ENCODE measurements at regions of chr9 and their contacts with region 1.

Region 1: DNA sequence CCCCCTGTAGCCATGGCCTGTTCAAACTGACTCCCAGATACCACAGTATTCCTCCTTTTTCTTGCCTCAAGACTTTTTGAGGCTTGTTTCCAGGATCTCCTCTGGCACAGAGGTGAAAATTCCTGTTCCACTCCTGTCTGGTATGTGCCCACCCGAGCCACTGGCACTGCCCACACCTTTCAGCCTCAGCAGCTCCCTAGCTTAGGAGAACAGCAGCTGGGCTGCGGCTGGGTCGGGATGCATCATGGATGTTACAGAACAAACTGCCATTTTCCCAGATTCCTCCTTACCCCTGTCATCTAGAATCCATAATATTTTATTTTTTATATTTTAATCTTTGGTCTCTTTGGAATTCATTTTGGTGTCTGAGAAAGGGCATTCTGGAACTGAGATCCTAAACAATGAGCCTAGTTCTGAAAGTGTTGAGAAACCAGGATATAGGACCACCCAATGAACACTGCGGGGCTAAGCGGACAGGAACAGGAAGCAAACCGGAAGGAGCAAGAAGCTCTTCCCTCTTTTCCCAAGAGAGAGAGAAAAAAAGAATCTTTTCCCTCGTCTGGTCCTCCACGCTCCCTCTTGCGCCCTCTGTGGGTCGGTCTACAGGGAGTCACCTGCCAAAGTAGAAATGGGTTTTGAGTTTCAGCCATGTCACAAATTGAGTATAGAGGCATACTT is 12.5 kb downstream of the OR2S2 start:
- DNase-seq: peak; percentile 80
- H3K4me3 Mint-ChIP-seq: no peak overlapping the region
- H3K27ac Mint-ChIP-seq: no peak overlapping the region
- H3K4me1 Mint-ChIP-seq: peaks cover 63% of the 10 kb centered on the region
- H3K27me3 Mint-ChIP-seq: no peaks in the 10 kb centered on the region

Region 2: GRCh38 chr9:35272989-35273388 is 672.5 kb before region 1 on chr9:
- CTCF ChIA-PET with region 1: no interaction called
- POLR2A ChIA-PET with region 1: no interaction called
- intact Hi-C with region 1: no loop called
- DNase-seq: no peak
- H3K4me3 Mint-ChIP-seq: no peak overlapping the region
- H3K27ac Mint-ChIP-seq: no peak overlapping the region
- H3K4me1 Mint-ChIP-seq: peaks cover 26% of the 10 kb centered on the region
- H3K27me3 Mint-ChIP-seq: peaks cover 5% of the 10 kb centered on the region

Region 3: GRCh38 chr9:35814841-35815543 is 130.5 kb before region 1 on chr9 and contains the start of gene HINT2:
- CTCF ChIA-PET with region 1: no interaction called
- POLR2A ChIA-PET with region 1: no interaction called
- intact Hi-C with region 1: no loop called
- DNase-seq: peak; percentile 99
- H3K4me3 Mint-ChIP-seq: peak within 1 kb of the TSS; percentile 96
- H3K27ac Mint-ChIP-seq: peak within 1 kb of the TSS; percentile 93
- H3K4me1 Mint-ChIP-seq: peaks cover 33% of the 10 kb centered on the region
- H3K27me3 Mint-ChIP-seq: no peaks in the 10 kb centered on the region
- total RNA-seq, gene HINT2: 67.8 to 72.6 TPM

Region 4: DNA sequence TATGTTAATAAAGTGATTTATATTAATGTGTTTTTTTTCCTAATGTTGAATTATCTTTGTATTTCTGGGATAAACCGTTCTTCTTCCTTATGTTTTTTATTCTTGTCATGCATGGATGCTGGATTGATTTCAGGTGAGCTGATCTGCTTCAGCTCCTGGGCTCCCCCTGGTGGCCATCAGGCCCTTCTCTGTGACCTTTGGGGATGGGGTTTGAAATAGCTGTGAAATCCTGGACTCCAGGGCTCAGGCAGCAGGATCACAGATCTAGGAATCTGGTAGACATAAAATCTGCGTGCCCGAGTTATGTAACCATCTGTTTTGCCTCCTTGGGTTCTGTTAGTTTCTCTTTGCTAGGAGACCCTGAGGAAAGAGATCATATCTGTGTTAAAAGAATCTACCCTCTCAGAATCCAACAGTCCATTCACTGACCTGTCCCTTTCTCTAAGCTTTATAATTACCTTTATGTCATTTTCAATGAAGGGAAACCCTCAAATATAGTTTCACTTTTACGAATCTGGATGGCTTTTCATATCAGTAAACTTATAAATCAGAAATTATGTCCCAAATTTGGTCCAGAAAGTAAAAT is 63.1 kb before region 1 on chr9:
- CTCF ChIA-PET with region 1: interaction called, 11 read pairs
- POLR2A ChIA-PET with region 1: no interaction called
- intact Hi-C with region 1: no loop called
- DNase-seq: peak; percentile 84
- H3K4me3 Mint-ChIP-seq: no peak overlapping the region
- H3K27ac Mint-ChIP-seq: no peak overlapping the region
- H3K4me1 Mint-ChIP-seq: no peaks in the 10 kb centered on the region
- H3K27me3 Mint-ChIP-seq: no peaks in the 10 kb centered on the region

Region 5: DNA sequence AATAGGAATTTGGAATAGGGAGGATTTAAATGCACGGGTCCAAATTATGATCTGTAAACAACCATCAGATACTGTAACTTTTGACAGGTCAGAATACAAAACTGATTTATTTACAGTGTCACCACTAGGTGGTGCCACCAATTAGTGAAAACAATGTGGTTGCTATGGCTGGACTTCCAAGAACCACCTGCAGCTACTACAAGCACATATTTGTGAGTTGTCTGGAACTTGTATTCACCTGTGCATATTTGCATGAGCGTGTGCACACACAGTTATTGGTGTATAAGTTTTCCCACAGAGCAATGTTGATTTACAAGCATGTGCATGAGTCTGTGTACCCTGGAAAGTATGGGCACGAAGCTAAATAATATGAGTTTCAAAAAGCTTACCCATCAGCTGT is 42.4 kb before region 1 on chr9:
- CTCF ChIA-PET with region 1: interaction called, 101 read pairs
- POLR2A ChIA-PET with region 1: no interaction called
- intact Hi-C with region 1: loop called (anchors 1 kb)
- DNase-seq: peak; percentile 31
- H3K4me3 Mint-ChIP-seq: no peak overlapping the region
- H3K27ac Mint-ChIP-seq: no peak overlapping the region
- H3K4me1 Mint-ChIP-seq: peaks cover 25% of the 10 kb centered on the region
- H3K27me3 Mint-ChIP-seq: peaks cover 4% of the 10 kb centered on the region

Region 6: DNA sequence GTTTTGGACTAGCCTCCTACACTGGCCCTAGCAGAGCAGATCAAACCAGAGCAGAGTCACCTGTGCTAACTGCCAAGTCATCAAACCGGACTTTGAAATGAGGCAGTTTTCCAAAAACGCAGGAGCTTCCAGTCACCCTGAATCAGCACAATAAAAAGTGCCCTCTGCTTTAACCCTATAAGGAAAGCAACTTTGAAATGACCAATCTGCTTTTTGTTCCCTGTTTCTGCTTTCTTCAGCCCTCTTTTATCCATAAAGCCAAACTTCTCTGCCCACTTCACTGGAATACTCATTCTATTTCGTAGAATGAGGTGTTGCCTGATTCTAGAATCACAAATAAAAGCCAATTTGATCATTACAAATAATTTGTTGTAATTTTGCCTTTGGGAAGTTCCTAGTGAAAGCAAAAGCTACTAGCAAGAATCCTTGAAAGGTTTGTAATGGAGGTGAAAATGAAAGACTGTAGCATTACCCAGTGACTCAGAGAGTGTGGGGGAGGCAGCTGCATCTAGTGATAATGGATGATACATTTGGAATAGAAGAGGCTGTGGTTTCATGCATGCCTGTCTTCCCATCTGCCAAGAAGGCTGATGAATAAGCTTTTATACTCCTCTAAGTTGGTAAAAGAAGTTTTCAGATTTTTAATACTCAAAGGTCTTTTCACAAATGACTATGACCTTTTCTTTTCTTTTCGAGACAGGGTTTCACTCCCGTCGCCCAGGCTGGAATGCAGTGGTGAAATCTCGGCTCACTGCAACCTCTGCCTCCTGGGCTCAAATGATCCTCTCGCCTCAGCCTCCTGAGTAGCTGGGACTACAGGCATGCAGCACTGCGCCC is 21.3 kb before region 1 on chr9:
- CTCF ChIA-PET with region 1: interaction called, 24 read pairs
- POLR2A ChIA-PET with region 1: interaction called, 11 read pairs
- intact Hi-C with region 1: no loop called
- DNase-seq: peak; percentile 71
- H3K4me3 Mint-ChIP-seq: no peak overlapping the region
- H3K27ac Mint-ChIP-seq: no peak overlapping the region
- H3K4me1 Mint-ChIP-seq: peaks cover 21% of the 10 kb centered on the region
- H3K27me3 Mint-ChIP-seq: no peaks in the 10 kb centered on the region

Region 7: DNA sequence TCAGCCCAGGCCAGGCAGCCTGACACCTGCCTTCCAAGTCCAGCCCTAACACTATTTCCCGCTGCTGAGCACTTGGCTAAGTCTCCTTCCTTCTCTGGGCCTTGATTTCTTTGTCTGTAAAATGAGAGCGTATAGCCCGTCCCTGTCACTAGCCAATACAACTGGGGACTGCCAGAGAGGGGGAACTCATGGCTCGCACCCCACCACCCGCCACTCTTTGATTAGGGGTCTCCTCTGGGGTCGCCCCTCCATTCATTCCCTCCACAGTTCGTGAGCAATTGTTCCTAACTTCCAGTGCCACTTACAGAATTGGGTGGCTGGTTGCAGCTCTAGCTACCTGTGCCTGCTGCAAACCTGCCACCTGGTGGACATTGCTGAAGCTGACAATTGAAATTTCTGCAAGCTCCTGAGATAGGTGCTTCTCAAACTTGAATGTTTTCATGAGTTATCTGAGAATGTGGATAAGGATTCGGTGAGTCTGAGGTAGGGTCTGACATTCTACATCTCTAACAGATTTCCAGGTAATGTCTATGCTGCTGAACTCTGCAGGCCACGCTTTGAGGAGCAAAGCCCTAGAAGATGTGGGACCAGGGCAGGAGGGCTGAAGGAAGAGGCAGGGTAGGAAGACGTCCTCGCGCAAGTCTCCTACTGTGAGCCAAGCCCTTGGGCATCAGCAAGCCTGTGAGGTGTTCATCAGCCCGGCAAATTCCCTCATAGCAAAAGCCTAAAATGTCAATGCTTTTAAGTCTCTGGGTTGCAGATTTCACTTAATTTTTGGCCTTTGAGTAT is 78.0 kb after region 1 on chr9:
- CTCF ChIA-PET with region 1: interaction called, 17 read pairs
- POLR2A ChIA-PET with region 1: no interaction called
- intact Hi-C with region 1: no loop called
- DNase-seq: peak; percentile 77
- H3K4me3 Mint-ChIP-seq: no peak overlapping the region
- H3K27ac Mint-ChIP-seq: no peak overlapping the region
- H3K4me1 Mint-ChIP-seq: no peaks in the 10 kb centered on the region
- H3K27me3 Mint-ChIP-seq: no peaks in the 10 kb centered on the region

Region 8: DNA sequence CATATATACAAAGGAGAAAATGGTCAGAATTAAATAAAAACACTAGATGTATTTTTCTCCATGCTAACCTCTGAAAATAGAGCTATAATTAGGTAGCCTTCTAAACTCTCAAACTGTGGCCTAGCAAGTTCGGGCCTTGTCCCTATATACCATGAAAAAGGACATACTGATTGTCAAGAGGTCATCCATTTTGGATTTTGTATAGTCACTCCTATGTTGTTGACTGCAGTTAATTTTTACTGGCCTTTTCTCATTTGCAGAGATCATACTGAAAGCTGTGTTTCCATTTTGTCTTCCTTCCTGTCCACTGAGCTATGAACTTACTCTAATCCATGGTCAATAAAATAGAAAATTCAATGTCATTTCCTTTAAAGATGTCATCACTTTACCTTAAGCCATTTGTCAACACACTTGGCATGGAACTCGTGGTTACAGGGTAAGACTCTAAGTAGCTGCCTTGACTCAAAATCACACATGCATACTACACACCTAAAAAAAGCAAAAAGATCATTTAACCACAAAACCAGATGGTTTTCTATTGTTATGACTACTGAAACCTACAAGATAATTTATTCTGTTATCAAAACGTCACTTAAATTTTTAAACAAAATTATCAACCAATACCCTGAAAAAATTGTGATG is 396.6 kb after region 1 on chr9:
- CTCF ChIA-PET with region 1: no interaction called
- POLR2A ChIA-PET with region 1: no interaction called
- intact Hi-C with region 1: no loop called
- DNase-seq: no peak
- H3K4me3 Mint-ChIP-seq: no peak overlapping the region
- H3K27ac Mint-ChIP-seq: peak overlapping the region; percentile 71
- H3K4me1 Mint-ChIP-seq: peaks cover 11% of the 10 kb centered on the region
- H3K27me3 Mint-ChIP-seq: no peaks in the 10 kb centered on the region

Region 9: DNA sequence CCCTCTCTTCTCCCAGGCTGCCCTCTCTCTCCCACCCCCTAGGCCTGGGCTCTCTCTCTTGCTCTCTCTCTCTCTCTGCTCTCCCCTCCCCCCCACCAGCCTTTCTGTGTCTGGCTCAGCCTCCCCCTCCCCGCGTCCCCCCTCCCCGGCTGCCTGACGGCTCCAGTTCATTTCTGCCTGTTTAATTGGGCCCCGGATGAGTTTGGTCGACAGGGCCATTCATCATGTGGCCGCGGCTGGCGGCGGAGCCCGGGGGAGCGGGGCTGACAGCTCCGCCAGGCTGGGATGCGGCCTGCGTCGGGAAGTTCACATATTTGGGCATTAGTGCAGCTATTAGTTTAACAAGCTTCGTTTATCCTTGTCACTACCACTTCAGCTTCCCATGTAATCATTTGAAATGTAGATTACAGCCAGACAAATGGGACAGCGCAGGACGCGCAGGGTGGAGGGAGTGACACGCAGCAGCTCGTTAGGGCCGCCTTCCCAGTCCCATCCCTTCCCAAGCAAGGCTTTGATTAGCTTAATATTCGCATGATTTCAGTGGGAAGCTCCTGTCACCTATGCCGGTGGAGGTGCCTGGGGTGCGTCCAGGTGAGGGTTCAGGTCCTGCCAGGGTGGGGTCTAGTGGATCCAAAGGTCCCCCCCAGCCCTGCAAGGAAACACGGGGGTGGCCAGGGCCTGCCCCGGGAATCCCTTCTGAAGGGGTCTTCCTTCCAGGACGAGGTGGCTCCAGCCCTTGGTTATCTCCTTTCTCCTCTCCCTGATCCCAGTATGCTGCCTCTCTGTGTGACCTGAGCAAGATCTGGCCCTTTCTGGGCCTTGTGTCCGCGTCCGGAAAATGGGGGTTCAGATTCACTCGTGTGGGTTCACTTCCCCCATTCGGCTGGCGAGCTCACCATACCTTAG is 873.7 kb after region 1 on chr9:
- CTCF ChIA-PET with region 1: no interaction called
- POLR2A ChIA-PET with region 1: no interaction called
- intact Hi-C with region 1: no loop called
- DNase-seq: no peak
- H3K4me3 Mint-ChIP-seq: no peak overlapping the region
- H3K27ac Mint-ChIP-seq: no peak overlapping the region
- H3K4me1 Mint-ChIP-seq: no peaks in the 10 kb centered on the region
- H3K27me3 Mint-ChIP-seq: peaks cover 19% of the 10 kb centered on the region

Measured in activated CD4-positive, alpha-beta memory T cell treated with anti-CD3 and anti-CD28 coated beads for 36 hours (primary cell).